Gastrocnemius medialis (tissue), 4 donors: ENCODE measurements at regions of chr2 and their contacts with region 1.

Region 1: DNA sequence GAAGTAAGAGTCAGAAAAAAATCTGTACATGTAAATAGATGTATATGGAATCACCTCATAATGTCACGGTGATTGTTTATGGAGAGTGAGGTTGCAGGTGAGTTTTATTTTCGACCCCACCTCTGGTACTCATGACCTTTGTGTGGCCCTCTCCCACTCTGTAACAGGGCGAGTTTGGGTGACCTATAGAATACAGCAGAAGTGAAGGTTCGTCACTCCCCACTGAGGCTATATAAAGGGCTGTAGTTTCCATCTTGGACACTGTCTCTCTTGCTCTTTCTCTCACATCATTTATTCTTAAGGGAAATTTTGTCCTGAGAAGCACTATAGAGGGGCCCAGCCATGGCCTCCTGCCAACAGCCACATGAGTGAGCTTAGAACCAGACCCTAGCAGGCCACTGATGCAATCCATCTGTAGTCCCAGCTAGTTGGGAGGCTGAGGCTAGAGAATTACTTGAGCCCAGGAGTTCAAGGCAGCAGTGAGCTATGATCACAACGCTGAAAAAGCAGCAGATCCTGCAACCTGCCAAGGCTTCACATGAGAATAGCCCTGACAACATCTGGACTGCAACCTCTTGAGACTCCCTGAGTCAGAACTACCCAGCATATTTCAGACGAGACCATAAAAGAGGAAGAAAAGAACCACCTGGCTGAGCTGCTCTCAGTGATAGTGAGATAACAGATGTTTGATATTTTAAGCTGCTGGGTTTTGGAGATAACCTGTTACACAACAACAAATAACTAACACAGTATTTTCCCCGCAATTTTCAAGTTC is 74.3 kb upstream of the SLC1A4 start:
- DNase-seq: no peak
- ATAC-seq: no peak
- H3K4me3 ChIP-seq: no peak overlapping the region
- H3K27ac ChIP-seq: no peak overlapping the region
- H3K4me1 ChIP-seq: peaks cover 0 to 10% of the 10 kb centered on the region in 2 donors
- H3K27me3 ChIP-seq: no peaks in the 10 kb centered on the region
- CTCF ChIP-seq: no peak
- POLR2A ChIP-seq: no peak

Region 2: DNA sequence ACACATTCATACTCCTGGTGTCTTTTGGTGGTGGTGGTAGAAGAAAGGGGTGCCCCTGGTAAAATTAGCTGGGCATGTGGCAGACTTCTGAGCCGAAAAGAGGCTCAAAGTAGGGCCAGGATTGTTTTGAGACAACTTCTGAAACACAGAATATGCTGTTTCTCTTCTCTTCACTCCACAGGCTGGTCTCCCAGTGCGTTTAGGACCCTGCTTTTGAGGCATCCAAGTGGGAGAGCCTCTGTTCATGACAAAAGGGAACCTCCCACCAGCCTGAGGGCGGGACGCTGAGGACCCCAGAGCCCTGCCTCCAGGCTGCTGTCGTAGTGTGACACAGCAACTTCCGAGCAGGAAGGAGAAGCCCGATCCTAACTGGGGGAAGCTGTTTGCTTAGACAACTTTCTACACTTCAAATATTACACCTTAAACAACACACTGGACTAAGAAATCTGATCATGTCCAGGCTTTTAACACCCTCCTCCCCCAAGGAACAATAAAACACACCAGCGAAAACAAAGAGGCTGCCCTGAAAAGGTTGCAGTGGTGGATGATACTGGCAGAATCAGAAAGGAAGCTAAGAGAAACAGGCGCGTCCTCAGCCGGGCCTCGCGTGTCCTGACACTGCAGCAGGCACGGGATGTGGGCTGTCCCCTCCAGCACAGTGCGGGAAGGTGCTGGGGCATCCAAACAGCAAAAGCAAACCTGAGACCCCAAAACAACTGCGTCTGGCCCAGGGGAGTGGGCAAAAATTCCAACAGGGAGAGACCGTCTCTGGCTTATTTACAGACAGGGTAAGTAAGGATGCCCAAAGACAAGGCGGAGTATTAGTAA is 270.5 kb before region 1 on chr2:
- in situ Hi-C with region 1: no loop called
- intact Hi-C with region 1: no loop called
- DNase-seq: peak; percentile 62 to 70
- ATAC-seq: peak; percentile 76 to 81
- H3K4me3 ChIP-seq: peak overlapping the region; percentile 49 to 61 (median 58)
- H3K27ac ChIP-seq: peak overlapping the region; percentile 85 to 93 (median 92)
- H3K4me1 ChIP-seq: peaks cover 54 to 58% of the 10 kb centered on the region in 2 donors
- H3K27me3 ChIP-seq: no peaks in the 10 kb centered on the region
- CTCF ChIP-seq: no peak
- POLR2A ChIP-seq: peak; percentile 67 to 82

Region 3: GRCh38 chr2:64711252-64711800 is 203.6 kb before region 1 on chr2:
- in situ Hi-C with region 1: no loop called
- intact Hi-C with region 1: no loop called
- DNase-seq: no peak
- ATAC-seq: no peak
- H3K4me3 ChIP-seq: no peak overlapping the region
- H3K27ac ChIP-seq: no peak overlapping the region
- H3K4me1 ChIP-seq: no peaks in the 10 kb centered on the region
- H3K27me3 ChIP-seq: no peaks in the 10 kb centered on the region
- CTCF ChIP-seq: no peak
- POLR2A ChIP-seq: no peak

Region 4: DNA sequence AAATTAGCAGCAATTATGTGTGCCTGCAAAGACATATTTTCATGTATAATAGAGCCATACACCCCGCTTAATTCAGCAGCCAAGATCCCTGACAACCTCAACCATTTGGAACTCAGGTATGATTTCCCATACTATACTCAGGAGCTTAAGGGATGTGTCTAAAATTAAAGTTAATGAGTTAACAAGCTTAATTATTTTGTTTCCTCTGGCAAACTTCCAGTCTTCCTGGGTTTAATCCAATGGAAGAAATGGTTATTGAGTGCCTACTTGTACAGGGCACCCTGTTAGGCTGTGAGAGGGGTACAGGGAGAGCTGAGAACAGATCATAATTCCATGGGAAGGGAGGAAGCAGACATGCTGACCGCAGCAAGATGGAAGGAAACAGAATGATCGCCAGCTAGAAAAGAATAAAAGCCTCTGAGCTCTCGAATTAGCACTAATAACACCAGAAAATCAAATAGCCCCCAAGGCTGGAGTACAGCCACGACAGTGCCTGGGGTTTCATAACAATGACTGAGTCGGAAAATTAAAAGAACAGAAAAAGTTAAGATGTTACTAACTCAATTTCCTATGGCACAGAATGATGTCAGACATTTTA is 120.5 kb after region 1 on chr2:
- in situ Hi-C with region 1: loop called (anchors 5 kb)
- intact Hi-C with region 1: loop called (anchors 1 kb)
- DNase-seq: no peak
- ATAC-seq: no peak
- H3K4me3 ChIP-seq: no peak overlapping the region
- H3K27ac ChIP-seq: no peak overlapping the region
- H3K4me1 ChIP-seq: peaks cover 10 to 15% of the 10 kb centered on the region in 2 donors
- H3K27me3 ChIP-seq: no peaks in the 10 kb centered on the region
- CTCF ChIP-seq: no peak
- POLR2A ChIP-seq: no peak

Region 5: GRCh38 chr2:65164426-65164891 is 249.5 kb after region 1 on chr2:
- in situ Hi-C with region 1: loop called in 2 of 4 experiments (anchors 10 to 25 kb)
- intact Hi-C with region 1: no loop called
- DNase-seq: no peak
- ATAC-seq: no peak
- H3K4me3 ChIP-seq: no peak overlapping the region
- H3K27ac ChIP-seq: no peak overlapping the region
- H3K4me1 ChIP-seq: peaks cover 3 to 7% of the 10 kb centered on the region in 2 donors
- H3K27me3 ChIP-seq: no peaks in the 10 kb centered on the region
- CTCF ChIP-seq: no peak
- POLR2A ChIP-seq: no peak

Region 6: DNA sequence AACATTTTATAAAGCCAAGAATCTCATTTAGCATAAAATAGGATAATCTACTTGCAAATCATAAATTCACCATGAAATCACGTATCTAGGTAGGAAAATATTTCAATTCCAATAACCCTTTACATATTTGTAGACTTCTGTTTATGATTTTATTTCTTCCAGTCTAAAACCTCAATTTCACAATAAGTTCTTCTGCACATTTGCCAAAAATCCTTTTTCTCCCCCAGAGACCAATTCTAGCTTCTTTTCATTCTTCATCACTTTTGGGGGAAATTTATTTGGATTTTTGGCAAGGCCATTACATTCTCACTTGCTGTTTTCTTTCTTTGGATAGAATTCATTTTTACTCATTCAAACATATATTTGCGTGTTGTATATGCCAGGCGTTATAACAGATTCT is 430.7 kb after region 1 on chr2:
- in situ Hi-C with region 1: no loop called
- intact Hi-C with region 1: no loop called
- DNase-seq: no peak
- ATAC-seq: peak in 1 of 2 donors; percentile 21
- H3K4me3 ChIP-seq: no peak overlapping the region
- H3K27ac ChIP-seq: peak overlapping the region in 2 of 4 donors; percentile 32 to 37
- H3K4me1 ChIP-seq: peaks cover 9 to 14% of the 10 kb centered on the region in 2 donors
- H3K27me3 ChIP-seq: no peaks in the 10 kb centered on the region
- CTCF ChIP-seq: no peak
- POLR2A ChIP-seq: no peak

Region 7: GRCh38 chr2:65554765-65555591 is 640.1 kb after region 1 on chr2:
- in situ Hi-C with region 1: loop called in 2 of 4 experiments (anchors 25 kb)
- intact Hi-C with region 1: no loop called
- DNase-seq: no peak
- ATAC-seq: no peak
- H3K4me3 ChIP-seq: no peak overlapping the region
- H3K27ac ChIP-seq: no peak overlapping the region
- H3K4me1 ChIP-seq: peaks cover 0 to 5% of the 10 kb centered on the region in 2 donors
- H3K27me3 ChIP-seq: no peaks in the 10 kb centered on the region
- CTCF ChIP-seq: no peak
- POLR2A ChIP-seq: no peak